ENCODE measurements at regions of chr11 and their contacts with region 1.

Region 1: GRCh38 chr11:125111343-125112207 is at the start of gene TMEM218:
- DNase-seq: peak; percentile 98
- ATAC-seq: peak; percentile 99
- H3K4me3 Mint-ChIP-seq: peak within 1 kb of the TSS; percentile 93
- H3K27ac Mint-ChIP-seq: peak within 1 kb of the TSS; percentile 95
- H3K4me1 Mint-ChIP-seq: peaks cover 18% of the 10 kb centered on the region
- H3K27me3 Mint-ChIP-seq: no peaks in the 10 kb centered on the region
- total RNA-seq, gene TMEM218: 11.3 TPM

Region 2: GRCh38 chr11:124622531-124623451 is 488.8 kb before region 1 on chr11 and contains the start of gene TBRG1:
- CTCF ChIA-PET with region 1: no interaction called
- POLR2A ChIA-PET with region 1: no interaction called
- intact Hi-C with region 1: loop called in 1 of 2 experiments (anchors 1 kb)
- DNase-seq: peak; percentile 87
- ATAC-seq: peak; percentile 99
- H3K4me3 Mint-ChIP-seq: peak within 1 kb of the TSS; percentile 93
- H3K27ac Mint-ChIP-seq: peak within 1 kb of the TSS; percentile 95
- H3K4me1 Mint-ChIP-seq: peaks cover 22% of the 10 kb centered on the region
- H3K27me3 Mint-ChIP-seq: peaks cover 5% of the 10 kb centered on the region
- total RNA-seq, gene TBRG1: 29.6 to 40.6 TPM

Region 3: DNA sequence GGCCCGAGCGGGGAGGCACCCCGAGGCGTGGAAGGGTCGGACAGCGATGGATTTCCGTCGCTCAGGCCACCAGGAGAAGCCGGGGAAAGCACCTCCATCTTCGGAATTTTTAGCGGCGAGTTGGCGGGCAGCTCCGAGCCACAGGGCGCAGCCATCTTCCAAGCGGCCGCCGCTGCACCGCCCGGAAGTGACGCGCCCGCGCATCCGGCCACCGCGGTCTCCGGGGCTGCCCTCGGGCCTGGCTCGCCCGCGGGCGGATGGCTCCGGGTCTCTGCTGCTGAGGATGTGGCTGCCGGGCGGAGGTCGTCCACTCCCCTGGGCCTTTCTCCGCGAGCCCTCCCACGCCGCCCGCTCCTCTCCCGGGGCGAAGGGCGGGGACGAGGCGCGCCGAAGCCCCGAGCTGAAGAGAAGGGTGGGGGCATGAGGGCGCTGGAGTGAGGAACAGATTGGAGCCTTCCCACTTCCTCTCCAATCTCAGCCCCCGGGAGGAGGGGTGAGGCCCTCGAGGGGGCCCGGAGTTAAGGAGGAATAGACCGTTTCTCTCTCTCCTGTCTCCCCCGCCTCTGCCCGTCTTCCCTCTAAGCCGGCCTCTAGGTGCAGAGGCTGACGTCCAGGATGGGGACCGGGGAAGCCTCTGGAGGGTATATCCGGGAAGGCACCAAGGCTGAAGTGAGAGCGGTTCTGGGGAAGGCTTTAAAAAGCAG is 311.2 kb before region 1 on chr11 and contains the start of gene MSANTD2:
- CTCF ChIA-PET with region 1: interaction called, 4 read pairs
- POLR2A ChIA-PET with region 1: no interaction called
- intact Hi-C with region 1: loop called in 1 of 2 experiments (anchors 1 kb)
- DNase-seq: peak; percentile 88
- ATAC-seq: peak; percentile 89
- H3K4me3 Mint-ChIP-seq: peak within 1 kb of the TSS; percentile 83
- H3K27ac Mint-ChIP-seq: peak within 1 kb of the TSS; percentile 95
- H3K4me1 Mint-ChIP-seq: peaks cover 36% of the 10 kb centered on the region
- H3K27me3 Mint-ChIP-seq: no peaks in the 10 kb centered on the region
- total RNA-seq, gene MSANTD2: 6.9 to 8.6 TPM

Region 4: GRCh38 chr11:124953753-124954589 is 157.6 kb before region 1 on chr11 and contains the start of gene CCDC15:
- CTCF ChIA-PET with region 1: interaction called, 7 read pairs
- POLR2A ChIA-PET with region 1: no interaction called
- intact Hi-C with region 1: loop called (anchors 1 to 2 kb)
- DNase-seq: peak; percentile 97
- ATAC-seq: peak; percentile 98
- H3K4me3 Mint-ChIP-seq: no peak within 1 kb of the TSS
- H3K27ac Mint-ChIP-seq: no peak within 1 kb of the TSS
- H3K4me1 Mint-ChIP-seq: peaks cover 4% of the 10 kb centered on the region
- H3K27me3 Mint-ChIP-seq: no peaks in the 10 kb centered on the region
- total RNA-seq, gene CCDC15: 5.6 to 6.7 TPM

Region 5: GRCh38 chr11:125123947-125124617 is 12.5 kb after region 1 on chr11:
- CTCF ChIA-PET with region 1: interaction called, 45 read pairs
- POLR2A ChIA-PET with region 1: no interaction called
- intact Hi-C with region 1: no loop called
- DNase-seq: peak; percentile 68
- ATAC-seq: peak; percentile 87
- H3K4me3 Mint-ChIP-seq: no peak overlapping the region
- H3K27ac Mint-ChIP-seq: no peak overlapping the region
- H3K4me1 Mint-ChIP-seq: no peaks in the 10 kb centered on the region
- H3K27me3 Mint-ChIP-seq: peaks cover 22% of the 10 kb centered on the region

Region 6: DNA sequence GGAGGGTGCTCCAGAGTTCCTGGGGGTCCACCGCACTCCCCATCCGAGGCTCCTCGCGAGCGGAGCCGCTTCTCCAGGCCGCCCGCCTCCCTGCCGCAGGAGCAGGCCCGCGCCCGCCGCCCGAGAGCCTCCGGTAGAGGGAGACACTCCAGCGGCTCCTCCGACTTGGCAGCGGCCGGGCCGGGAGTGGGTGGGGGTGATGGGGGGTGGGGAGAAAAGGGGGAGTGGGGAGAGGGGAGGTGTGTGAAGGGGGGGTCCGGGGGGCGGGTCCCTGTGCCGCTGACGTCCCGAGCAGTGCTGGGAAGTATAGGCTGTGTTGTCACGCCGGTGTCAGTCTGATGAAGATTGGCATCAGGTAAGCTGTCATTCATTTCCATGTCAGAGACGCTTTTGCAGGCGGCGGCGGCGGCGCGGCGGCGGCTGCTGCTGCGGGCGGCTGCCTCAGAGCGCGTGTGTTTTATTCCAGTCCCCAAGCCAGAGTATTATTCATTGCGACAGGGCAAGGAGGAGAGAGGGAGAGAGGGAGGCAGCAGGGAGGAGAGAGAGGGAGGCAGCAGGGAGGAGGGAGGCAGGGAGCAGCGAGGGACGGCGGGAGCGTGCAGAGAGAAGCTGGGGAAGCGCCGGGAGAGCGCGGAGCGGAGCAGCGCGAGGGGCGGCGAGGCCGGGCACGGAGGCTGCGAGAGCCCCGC is 53.0 kb after region 1 on chr11 and contains the start of gene PKNOX2:
- CTCF ChIA-PET with region 1: no interaction called
- POLR2A ChIA-PET with region 1: no interaction called
- intact Hi-C with region 1: loop called in 1 of 2 experiments (anchors 2 kb)
- DNase-seq: peak; percentile 83
- ATAC-seq: peak; percentile 85
- H3K4me3 Mint-ChIP-seq: peak within 1 kb of the TSS; percentile 77
- H3K27ac Mint-ChIP-seq: peak within 1 kb of the TSS; percentile 51
- H3K4me1 Mint-ChIP-seq: peaks cover 18% of the 10 kb centered on the region
- H3K27me3 Mint-ChIP-seq: peaks cover 53% of the 10 kb centered on the region
- total RNA-seq, gene PKNOX2: not detected

Region 7: GRCh38 chr11:125592305-125593112 is 480.9 kb after region 1 on chr11 and contains the start of gene STT3A:
- CTCF ChIA-PET with region 1: no interaction called
- POLR2A ChIA-PET with region 1: no interaction called
- intact Hi-C with region 1: loop called in 1 of 2 experiments (anchors 1 kb)
- DNase-seq: peak; percentile 99
- ATAC-seq: peak; percentile 93
- H3K4me3 Mint-ChIP-seq: peak within 1 kb of the TSS; percentile 97
- H3K27ac Mint-ChIP-seq: peak within 1 kb of the TSS; percentile 95
- H3K4me1 Mint-ChIP-seq: peaks cover 48% of the 10 kb centered on the region
- H3K27me3 Mint-ChIP-seq: no peaks in the 10 kb centered on the region
- total RNA-seq, gene STT3A: 127 to 128 TPM

Measured in activated CD4-positive, alpha-beta T cell treated with anti-CD3 and anti-CD28 coated beads for 36 hours (primary cell).